Psoas muscle (tissue), 8 donors: ENCODE measurements at regions of chr16 and their contacts with region 1.

Region 1: DNA sequence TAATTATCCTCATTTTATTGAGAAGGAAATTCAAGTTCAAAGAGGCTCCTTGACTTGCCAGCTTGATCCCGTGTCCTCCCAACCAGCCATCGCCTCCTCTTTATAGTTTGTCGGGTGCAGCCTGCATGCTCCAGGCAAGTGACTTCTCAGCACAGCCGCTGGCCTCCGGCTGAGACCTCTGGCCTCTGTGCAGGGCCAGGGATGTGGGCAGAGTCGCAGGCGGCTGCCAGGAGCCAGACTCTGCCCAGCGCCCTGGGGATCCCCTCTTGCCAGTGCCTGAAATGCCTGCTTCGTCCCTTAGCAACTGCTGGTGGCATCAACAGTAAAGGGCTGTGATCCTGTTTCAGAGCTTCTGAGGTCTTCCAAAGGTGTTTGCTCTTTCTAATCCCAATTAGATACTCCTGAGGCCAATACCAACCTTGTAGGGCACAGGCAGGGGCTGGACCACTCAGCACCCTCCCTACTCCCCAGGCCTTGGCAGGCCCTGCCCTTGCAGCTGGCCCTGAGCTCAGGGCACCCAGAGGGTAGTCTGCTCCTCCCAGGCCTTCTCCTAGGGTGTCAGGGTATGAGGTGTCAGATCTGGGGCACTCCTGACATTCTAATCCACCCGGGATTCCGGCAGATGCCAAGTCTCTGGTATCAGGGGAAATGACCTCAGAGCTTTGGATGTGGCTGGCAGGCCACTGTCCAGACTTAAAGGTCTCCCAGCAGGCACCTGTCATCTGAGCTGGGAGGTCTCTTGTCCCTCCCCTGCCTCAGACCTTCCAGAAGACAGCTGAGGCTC is 68.0 kb upstream of the SIAH1 start:
- DNase-seq: peak; percentile 46 to 78
- ATAC-seq: peak; percentile 93 to 95 (median 93)
- H3K4me3 ChIP-seq: no peak overlapping the region
- H3K27ac ChIP-seq: peak overlapping the region; percentile 79
- H3K4me1 ChIP-seq: peaks cover 22% of the 10 kb centered on the region
- H3K27me3 ChIP-seq: no peaks in the 10 kb centered on the region
- CTCF ChIP-seq: no peak

Region 2: GRCh38 chr16:48269011-48269410 is 184.2 kb before region 1 on chr16:
- intact Hi-C with region 1: loop called in 1 of 2 experiments (anchors 10 kb)
- DNase-seq: no peak
- ATAC-seq: no peak
- H3K4me3 ChIP-seq: no peak overlapping the region
- H3K27ac ChIP-seq: no peak overlapping the region
- H3K4me1 ChIP-seq: peaks cover 11% of the 10 kb centered on the region
- H3K27me3 ChIP-seq: no peaks in the 10 kb centered on the region
- CTCF ChIP-seq: no peak

Region 3: DNA sequence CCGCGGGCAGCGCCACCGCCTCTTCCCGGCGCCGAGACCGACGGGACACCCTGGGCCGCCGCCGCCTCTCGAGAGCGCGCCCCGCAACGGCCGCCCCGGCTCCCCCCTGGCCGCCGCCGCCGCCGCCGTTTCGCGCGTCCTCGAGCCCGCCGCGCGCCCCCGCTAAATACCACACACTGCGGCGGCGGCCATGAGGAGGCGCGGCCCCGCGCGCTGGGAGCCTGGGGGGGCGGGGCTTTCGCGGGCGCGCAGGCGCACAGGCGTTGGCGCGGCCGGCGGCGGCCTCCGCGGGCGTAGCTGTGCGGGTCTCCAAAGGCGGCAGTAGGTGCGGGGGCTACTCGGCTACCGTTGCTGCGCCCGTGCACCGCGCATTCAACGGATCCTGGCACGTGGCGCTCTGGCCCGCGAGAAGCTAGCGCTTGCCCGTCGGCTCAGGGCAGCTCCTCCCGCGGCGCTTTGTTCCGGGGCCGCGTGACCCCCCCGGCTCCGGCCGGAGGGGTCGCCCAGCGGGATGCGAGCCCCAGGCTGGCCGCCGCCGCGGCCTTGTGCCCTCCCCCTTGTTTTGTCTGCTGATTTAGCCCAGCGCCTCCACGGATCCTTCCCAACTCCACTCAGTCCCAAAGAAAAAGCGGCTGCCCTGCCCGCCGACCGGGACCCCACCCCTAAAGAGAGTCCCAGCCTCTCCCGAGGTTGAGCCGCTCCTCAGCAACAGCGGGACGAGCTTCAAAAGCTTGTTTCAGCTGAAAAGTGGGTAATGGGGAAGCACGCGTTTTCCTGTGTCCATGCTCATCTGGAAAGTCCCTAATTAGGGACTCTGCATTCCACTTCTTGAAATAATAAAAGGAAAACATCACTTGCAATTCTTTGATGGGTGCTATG is 67.7 kb before region 1 on chr16 and contains the start of gene SIAH1:
- intact Hi-C with region 1: loop called in 1 of 2 experiments (anchors 5 kb)
- DNase-seq: peak; percentile 88 to 92
- ATAC-seq: peak; percentile 88 to 91 (median 89)
- H3K4me3 ChIP-seq: peak within 1 kb of the TSS; percentile 74
- H3K27ac ChIP-seq: peak within 1 kb of the TSS; percentile 100
- H3K4me1 ChIP-seq: peaks cover 38% of the 10 kb centered on the region
- H3K27me3 ChIP-seq: no peaks in the 10 kb centered on the region
- CTCF ChIP-seq: no peak
- total RNA-seq, gene SIAH1: 16.2 to 26.0 (median 18.6) TPM

Region 4: GRCh38 chr16:48470232-48470631 is 17.1 kb after region 1 on chr16:
- intact Hi-C with region 1: no loop called
- DNase-seq: no peak
- ATAC-seq: no peak
- H3K4me3 ChIP-seq: no peak overlapping the region
- H3K27ac ChIP-seq: no peak overlapping the region
- H3K4me1 ChIP-seq: no peaks in the 10 kb centered on the region
- H3K27me3 ChIP-seq: no peaks in the 10 kb centered on the region
- CTCF ChIP-seq: no peak

Region 5: DNA sequence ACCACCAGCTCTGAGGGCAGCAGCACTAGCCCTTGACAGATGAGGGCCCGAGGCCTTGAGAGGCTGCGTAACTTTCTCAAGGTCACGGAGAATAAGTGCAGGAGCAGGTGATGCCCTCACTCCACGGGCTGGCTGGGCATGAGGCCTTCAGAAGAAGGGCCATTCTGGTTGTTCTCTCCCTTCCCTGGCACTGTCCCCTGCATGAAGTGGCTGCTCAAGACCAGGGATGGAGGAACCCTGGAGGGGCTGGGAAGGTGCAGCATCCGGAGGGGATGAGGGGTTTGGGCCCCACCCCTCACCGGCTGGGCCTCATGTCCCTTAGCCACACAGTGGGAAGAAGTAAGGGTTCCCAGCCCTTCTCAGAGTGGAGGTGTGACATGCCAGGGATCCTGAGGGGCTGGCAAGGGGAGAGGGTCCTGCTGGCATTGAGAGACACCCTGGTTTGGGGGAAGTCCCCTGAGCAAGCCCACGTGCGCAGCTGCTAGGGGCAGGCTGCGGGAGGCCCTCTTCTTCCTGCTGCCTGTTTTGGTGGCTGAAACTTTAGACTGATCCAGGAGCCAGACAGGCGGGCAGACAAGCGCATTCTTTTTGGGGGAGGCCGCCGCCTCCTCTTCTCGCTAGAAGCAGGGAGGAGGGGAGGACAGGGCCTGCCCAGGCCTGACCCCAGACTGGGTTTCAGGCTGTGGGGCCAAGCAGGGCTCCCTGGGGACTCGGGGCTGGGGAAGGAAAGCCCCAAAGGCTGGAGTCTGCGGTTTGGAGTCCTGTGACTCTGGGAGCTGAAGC is 82.9 kb after region 1 on chr16:
- intact Hi-C with region 1: loop called in 1 of 2 experiments (anchors 2 kb)
- DNase-seq: peak; percentile 84 to 85
- ATAC-seq: peak; percentile 57 to 90 (median 73)
- H3K4me3 ChIP-seq: no peak overlapping the region
- H3K27ac ChIP-seq: peak overlapping the region; percentile 87
- H3K4me1 ChIP-seq: peaks cover 52% of the 10 kb centered on the region
- H3K27me3 ChIP-seq: no peaks in the 10 kb centered on the region
- CTCF ChIP-seq: no peak

Region 6: DNA sequence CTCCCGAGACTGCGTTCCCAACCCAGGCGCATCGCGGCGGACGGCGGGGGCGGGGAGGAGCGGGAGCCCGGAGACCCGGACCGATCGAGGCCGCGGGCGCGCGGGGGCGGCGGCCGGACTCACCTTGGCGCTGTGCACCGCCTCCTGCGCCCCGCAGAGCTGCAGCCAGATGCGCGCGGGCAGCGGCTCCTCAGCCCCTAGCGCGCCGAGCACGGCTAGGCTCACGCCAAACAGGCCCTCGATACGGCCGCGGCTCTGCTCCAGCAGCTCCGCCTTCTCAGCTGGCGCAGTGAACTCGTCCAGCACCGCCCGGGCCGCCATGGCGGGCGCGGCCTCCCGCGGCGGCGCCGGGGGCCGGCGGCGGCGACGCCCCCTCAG is 156.5 kb after region 1 on chr16:
- intact Hi-C with region 1: loop called in 1 of 2 experiments (anchors 10 kb)
- DNase-seq: peak; percentile 67 to 87
- ATAC-seq: peak; percentile 51 to 69 (median 62)
- H3K4me3 ChIP-seq: peak overlapping the region; percentile 100
- H3K27ac ChIP-seq: peak overlapping the region; percentile 87
- H3K4me1 ChIP-seq: peaks cover 45% of the 10 kb centered on the region
- H3K27me3 ChIP-seq: no peaks in the 10 kb centered on the region
- CTCF ChIP-seq: no peak

Region 7: DNA sequence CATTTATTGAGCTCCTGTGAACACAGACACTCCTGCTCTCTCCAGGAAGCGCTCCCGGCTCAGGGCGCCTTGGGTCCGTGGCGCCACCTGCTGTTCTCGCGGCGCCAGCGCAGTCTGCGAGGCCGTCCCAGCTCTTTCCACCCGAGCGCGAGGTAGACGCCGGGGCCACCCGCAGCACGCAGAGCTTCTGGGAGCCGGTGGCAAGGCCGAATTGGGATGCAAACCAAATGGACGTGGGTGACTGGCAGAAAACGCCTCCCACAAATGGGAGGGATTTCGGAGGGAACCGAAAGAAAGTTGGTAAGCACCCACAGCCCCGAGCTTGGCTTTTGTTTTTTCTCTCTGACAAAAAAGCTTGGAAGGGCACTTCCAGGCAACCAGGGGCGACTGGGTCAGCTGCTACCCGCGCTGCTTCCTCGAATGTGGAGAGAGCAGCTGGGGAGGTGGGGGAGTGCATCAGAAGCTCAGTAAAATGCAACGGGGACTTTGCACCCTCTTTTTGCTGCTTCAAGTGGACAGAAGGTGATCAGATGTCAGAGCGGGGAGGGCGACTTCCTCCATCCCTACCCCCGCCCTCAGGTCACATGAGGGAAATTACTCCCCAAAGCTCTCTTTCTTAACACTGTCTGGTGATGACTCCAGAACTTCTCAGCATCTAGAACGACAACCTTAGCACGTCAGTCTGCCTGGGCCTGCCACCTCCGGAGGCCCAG is 170.3 kb after region 1 on chr16:
- intact Hi-C with region 1: loop called (anchors 10 kb)
- DNase-seq: peak; percentile 82 to 89
- ATAC-seq: peak; percentile 96 to 99 (median 98)
- H3K4me3 ChIP-seq: peak overlapping the region; percentile 69
- H3K27ac ChIP-seq: peak overlapping the region; percentile 55
- H3K4me1 ChIP-seq: peaks cover 8% of the 10 kb centered on the region
- H3K27me3 ChIP-seq: peaks cover 0 to 1% (median 0%) of the 10 kb centered on the region in 3 donors
- CTCF ChIP-seq: peak; percentile 99